OCI-LY7 (cell line): ENCODE measurements at regions of chr14 and their contacts with region 1.

Region 1: GRCh38 chr14:103576371-103577024 is 13.7 kb downstream of the COA8 start:
- DNase-seq: no peak
- H3K4me3 ChIP-seq: no peak overlapping the region
- H3K27ac ChIP-seq: no peak overlapping the region
- H3K4me1 ChIP-seq: no peaks in the 10 kb centered on the region
- CTCF ChIP-seq: no peak

Region 2: DNA sequence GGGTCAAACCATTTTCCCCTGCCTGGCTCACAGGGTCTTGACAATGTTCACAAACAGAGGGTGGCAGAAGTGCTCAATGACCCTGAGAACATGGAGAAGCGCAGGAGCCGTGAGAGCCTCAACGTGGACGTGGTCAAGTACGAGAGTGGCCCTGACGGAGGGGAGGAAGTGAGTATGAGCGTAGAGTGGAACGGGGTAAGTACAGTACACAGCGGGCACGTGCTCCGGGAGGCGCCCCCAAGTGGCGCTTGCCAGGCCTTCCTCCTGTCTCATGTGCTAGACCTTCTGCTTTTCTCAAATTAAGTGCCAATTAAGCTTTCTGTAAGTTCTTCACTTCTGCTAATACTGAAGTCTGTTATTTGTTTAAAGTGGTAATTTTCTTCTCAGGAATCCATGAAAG is 102.9 kb after region 1 on chr14:
- CTCF ChIA-PET with region 1: no interaction called
- POLR2A ChIA-PET with region 1: no interaction called
- intact Hi-C with region 1: loop called (anchors 2 kb)
- DNase-seq: peak; percentile 69
- H3K4me3 ChIP-seq: no peak overlapping the region
- H3K27ac ChIP-seq: peak overlapping the region; percentile 3
- H3K4me1 ChIP-seq: peaks cover 12% of the 10 kb centered on the region
- CTCF ChIP-seq: peak; percentile 94

Region 3: DNA sequence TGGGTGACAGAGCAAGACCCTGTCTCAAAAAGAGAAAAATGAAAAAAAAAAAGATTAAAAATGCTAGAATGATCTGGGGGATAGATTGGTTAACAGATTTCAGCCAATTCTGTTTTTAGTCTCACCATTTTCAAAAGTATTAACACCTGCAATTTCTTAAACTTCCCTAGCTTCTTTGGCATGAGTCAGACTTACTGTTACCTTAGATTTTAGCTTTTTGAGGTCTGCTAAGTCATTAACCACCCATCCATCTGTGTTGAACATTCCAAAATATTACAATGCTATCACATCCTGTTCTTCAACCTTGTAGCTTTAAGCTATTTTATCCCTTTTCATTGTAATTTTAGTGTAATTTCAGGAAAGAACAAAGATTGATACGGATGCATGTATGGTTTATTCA is 211.6 kb after region 1 on chr14:
- CTCF ChIA-PET with region 1: no interaction called
- POLR2A ChIA-PET with region 1: no interaction called
- intact Hi-C with region 1: loop called (anchors 1 kb)
- DNase-seq: no peak
- H3K4me3 ChIP-seq: no peak overlapping the region
- H3K27ac ChIP-seq: no peak overlapping the region
- H3K4me1 ChIP-seq: no peaks in the 10 kb centered on the region
- CTCF ChIP-seq: no peak